Activated CD8-positive, alpha-beta T cell treated with anti-CD3 and anti-CD28 coated beads for 36 hours (primary cell): ENCODE measurements at regions of chr3 and their contacts with region 1.

Region 1: DNA sequence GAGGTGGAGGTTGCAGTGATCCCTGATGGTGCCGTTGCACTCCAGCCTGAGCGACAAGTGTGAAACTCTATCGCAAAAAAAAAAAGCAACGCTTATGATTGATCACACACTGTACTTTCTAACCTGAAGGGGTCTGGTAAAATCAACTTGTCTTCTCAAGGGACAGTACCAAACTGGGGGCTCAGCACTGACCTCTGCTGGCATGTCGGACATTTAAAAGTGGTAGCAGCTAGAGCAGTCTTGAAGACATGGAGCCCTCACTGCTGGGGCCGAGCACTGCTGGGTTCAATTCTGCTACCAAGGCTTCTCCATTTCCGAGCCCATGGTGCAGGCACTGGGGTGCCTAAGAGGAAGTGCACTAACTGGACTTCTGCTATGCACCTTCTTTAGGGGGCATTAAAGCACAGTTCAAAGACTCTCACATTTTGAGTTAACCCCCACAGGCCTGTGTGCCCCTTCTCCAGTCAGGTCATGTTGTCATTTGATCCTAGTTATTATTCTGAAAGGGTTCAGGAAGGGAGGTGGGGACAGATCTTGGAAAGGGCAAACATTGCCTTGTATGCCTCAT is 26.4 kb upstream of the LAMP3 start:
- DNase-seq: peak; percentile 64
- ATAC-seq: peak; percentile 46
- H3K4me3 Mint-ChIP-seq: no peak overlapping the region
- H3K27ac Mint-ChIP-seq: no peak overlapping the region
- H3K4me1 Mint-ChIP-seq: peaks cover 26% of the 10 kb centered on the region
- H3K27me3 Mint-ChIP-seq: no peaks in the 10 kb centered on the region
- CTCF ChIP-seq: peak; percentile 28

Region 2: DNA sequence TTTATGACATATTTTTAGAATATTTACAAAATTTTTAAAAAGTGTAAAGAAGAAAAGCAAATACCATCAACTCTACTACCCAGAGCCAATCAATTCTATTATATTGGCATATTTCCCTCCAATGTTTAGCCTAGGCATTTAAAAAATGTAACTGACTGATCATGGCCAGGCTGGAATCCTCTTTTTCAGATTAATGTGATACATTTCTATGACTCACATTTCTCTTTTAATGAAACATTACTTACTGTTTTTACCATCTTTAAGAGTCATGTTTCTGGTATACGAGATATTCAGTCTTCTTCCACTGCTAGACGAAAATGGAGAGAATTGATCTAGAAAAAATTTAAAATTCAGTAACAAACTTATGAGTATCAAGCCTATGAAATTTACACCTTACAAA is 155.2 kb before region 1 on chr3:
- CTCF ChIA-PET with region 1: no interaction called
- POLR2A ChIA-PET with region 1: no interaction called
- intact Hi-C with region 1: no loop called
- DNase-seq: no peak
- ATAC-seq: no peak
- H3K4me3 Mint-ChIP-seq: no peak overlapping the region
- H3K27ac Mint-ChIP-seq: no peak overlapping the region
- H3K4me1 Mint-ChIP-seq: no peaks in the 10 kb centered on the region
- H3K27me3 Mint-ChIP-seq: no peaks in the 10 kb centered on the region
- CTCF ChIP-seq: no peak

Region 3: GRCh38 chr3:183044547-183045229 is 144.3 kb before region 1 on chr3:
- CTCF ChIA-PET with region 1: no interaction called
- POLR2A ChIA-PET with region 1: no interaction called
- intact Hi-C with region 1: no loop called
- DNase-seq: no peak
- ATAC-seq: no peak
- H3K4me3 Mint-ChIP-seq: no peak overlapping the region
- H3K27ac Mint-ChIP-seq: peak overlapping the region; percentile 45
- H3K4me1 Mint-ChIP-seq: peaks cover 4% of the 10 kb centered on the region
- H3K27me3 Mint-ChIP-seq: no peaks in the 10 kb centered on the region
- CTCF ChIP-seq: no peak

Region 4: DNA sequence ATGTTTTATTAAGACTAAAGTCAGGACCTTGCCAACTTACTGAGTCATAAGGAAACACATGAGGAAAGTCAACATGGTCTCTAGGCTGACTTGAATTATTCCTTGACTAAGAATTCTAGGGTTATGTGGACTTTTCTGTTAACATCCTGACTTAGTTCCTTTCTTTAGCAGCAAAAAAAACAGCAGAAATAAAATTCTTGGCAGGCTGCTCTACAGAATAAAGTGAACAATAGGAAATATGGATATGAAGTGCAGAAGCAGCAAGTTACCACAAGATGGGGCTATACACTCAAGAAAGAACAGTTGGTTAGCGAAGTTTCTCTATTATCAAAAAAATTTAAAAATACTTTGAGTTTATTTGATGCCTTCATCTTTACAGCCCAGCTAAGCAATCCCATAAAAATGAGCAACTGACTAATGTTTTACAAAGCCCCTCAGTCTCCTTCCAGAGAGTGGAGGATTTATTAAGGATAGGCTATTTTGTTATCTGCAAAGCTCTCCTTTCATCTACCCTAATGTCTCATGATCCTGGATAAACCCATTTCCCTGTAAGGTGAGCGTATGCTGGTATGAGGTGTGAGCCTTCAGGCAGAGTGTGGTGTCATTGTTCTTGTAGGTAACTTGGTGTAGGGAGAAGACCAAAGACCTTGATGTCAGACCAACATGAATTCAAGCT is 66.6 kb before region 1 on chr3:
- CTCF ChIA-PET with region 1: interaction called, 38 read pairs
- POLR2A ChIA-PET with region 1: interaction called, 3 read pairs
- intact Hi-C with region 1: loop called (anchors 5 kb)
- DNase-seq: no peak
- ATAC-seq: peak; percentile 56
- H3K4me3 Mint-ChIP-seq: no peak overlapping the region
- H3K27ac Mint-ChIP-seq: no peak overlapping the region
- H3K4me1 Mint-ChIP-seq: peaks cover 6% of the 10 kb centered on the region
- H3K27me3 Mint-ChIP-seq: peaks cover 3% of the 10 kb centered on the region
- CTCF ChIP-seq: peak; percentile 87

Region 5: GRCh38 chr3:183208260-183208659 is 19.3 kb after region 1 on chr3:
- CTCF ChIA-PET with region 1: interaction called, 19 read pairs
- POLR2A ChIA-PET with region 1: no interaction called
- intact Hi-C with region 1: no loop called
- DNase-seq: peak; percentile 50
- ATAC-seq: peak; percentile 59
- H3K4me3 Mint-ChIP-seq: peak overlapping the region; percentile 10
- H3K27ac Mint-ChIP-seq: peak overlapping the region; percentile 94
- H3K4me1 Mint-ChIP-seq: peaks cover 68% of the 10 kb centered on the region
- H3K27me3 Mint-ChIP-seq: no peaks in the 10 kb centered on the region
- CTCF ChIP-seq: no peak

Region 6: GRCh38 chr3:183265834-183266417 is 76.9 kb after region 1 on chr3:
- CTCF ChIA-PET with region 1: interaction called, 12 read pairs
- POLR2A ChIA-PET with region 1: interaction called, 4 read pairs
- intact Hi-C with region 1: no loop called
- DNase-seq: peak; percentile 80
- ATAC-seq: peak; percentile 93
- H3K4me3 Mint-ChIP-seq: no peak overlapping the region
- H3K27ac Mint-ChIP-seq: no peak overlapping the region
- H3K4me1 Mint-ChIP-seq: peaks cover 28% of the 10 kb centered on the region
- H3K27me3 Mint-ChIP-seq: no peaks in the 10 kb centered on the region
- CTCF ChIP-seq: no peak

Region 7: GRCh38 chr3:183377307-183377959 is 188.5 kb after region 1 on chr3:
- CTCF ChIA-PET with region 1: interaction called, 277 read pairs
- POLR2A ChIA-PET with region 1: no interaction called
- intact Hi-C with region 1: loop called (anchors 1 kb)
- DNase-seq: no peak
- ATAC-seq: peak; percentile 73
- H3K4me3 Mint-ChIP-seq: no peak overlapping the region
- H3K27ac Mint-ChIP-seq: peak overlapping the region; percentile 10
- H3K4me1 Mint-ChIP-seq: peaks cover 37% of the 10 kb centered on the region
- H3K27me3 Mint-ChIP-seq: no peaks in the 10 kb centered on the region
- CTCF ChIP-seq: no peak

Region 8: DNA sequence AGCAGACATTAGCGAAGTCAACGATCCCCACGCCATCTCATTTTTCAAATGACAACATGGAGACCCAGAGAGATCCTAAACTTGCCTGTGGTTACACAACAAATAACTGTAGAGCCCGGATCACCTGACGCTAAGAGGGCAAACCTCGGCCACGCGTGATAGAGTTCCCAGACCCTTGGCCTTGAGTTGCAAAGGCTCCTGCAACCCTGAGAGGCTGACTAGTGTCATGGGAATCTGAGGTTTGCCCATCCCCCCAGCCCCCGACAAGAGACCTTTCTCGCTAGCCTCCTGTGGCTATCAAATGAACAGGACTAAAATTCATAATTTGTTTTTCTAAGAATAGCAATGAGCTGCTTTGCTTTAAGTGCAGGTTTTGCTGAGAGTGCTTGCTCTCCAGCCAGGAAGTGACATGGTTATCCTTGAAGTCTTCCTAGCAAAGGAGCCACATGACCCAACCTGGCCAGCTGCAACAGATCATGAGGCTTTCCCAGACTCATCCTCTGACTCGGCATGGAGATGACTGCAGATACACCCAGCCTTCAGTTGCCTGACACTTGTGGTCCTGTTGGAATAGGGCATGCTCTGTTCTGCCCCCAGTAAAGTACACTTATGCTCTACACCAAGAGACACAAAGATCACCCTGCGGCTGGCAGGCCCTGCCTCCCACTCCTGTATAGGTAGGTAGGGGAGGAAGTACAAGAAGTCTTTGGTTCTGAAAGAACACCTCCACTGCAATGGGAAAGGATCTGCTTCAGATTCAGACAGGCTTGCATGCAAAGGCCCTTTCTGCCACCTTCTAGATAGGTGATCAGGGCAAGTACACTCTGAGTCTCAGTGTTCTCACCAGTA is 203.4 kb after region 1 on chr3:
- CTCF ChIA-PET with region 1: interaction called, 18 read pairs
- POLR2A ChIA-PET with region 1: no interaction called
- intact Hi-C with region 1: no loop called
- DNase-seq: no peak
- ATAC-seq: no peak
- H3K4me3 Mint-ChIP-seq: no peak overlapping the region
- H3K27ac Mint-ChIP-seq: no peak overlapping the region
- H3K4me1 Mint-ChIP-seq: peaks cover 2% of the 10 kb centered on the region
- H3K27me3 Mint-ChIP-seq: no peaks in the 10 kb centered on the region
- CTCF ChIP-seq: no peak